Heart right ventricle (tissue), 16 donors: ENCODE measurements at regions of chr6 and their contacts with region 1.

Region 1: DNA sequence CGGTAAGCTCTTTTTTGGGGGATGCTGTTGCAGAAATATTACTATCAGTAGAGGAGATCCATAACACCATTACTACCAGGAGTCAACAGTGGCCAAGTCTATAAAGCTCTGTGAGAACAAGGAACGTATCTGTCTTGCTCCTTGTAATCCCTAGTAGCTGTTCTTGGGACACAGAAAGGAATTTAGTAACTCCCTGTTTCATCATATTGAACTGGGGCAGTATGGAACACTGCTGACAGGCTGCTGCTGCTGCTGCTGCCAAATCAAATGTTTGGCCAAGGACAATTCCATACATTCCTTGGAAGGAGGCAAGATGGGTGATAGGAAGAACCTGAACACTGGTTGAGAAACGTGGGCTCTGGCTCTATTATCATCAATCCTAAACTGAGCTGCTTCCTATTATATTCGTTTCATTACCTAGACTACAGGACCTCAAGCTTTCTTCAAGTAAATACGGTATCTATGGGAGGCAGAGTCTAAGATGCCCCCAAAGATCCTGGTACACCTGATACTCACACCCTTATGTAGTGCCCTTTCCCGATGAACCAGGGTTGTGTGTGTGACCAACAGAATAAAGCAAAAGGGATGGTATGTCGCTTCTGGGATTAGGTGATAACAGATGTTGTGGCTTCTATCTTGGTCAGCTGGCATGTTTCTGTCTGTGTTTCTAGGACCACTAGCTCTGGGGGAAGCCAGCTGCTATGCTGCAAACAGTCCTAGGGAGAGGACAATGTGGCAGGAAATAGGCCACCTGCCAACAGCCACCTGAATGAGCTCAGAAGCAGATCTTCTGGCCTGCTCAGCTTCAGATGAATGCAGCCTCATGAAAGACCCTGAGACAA is 39.5 kb downstream of the ELOVL5 start:
- DNase-seq: no peak
- ATAC-seq: peak in 5 of 8 donors; percentile 36 to 63 (median 48)
- H3K4me3 ChIP-seq: no peak overlapping the region
- H3K27ac ChIP-seq: peak overlapping the region in 2 of 10 donors; percentile 31 to 35
- H3K4me1 ChIP-seq: peaks cover 0 to 78% (median 46%) of the 10 kb centered on the region in 9 donors
- H3K27me3 ChIP-seq: no peaks in the 10 kb centered on the region
- CTCF ChIP-seq: no peak

Region 2: DNA sequence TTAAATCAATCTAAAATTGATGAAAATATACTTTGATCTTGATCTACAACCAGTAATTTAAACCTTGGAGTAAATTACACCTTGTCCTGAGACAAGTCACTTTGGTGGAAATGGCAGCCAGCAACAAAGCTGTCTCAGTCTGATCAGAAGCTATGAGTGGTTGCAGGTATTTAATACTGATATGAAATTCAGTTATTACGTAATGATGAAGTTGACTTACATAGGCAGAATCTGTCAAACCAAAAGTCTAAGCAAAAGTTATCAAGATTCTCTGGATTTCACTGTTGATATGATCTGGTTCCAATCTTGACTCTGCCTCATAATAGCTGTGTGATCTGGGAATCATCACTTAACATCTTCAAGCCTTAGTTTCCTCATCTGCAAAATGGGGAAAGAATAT is 441.0 kb before region 1 on chr6:
- intact Hi-C with region 1: no loop called
- DNase-seq: no peak
- ATAC-seq: no peak
- H3K4me3 ChIP-seq: no peak overlapping the region
- H3K27ac ChIP-seq: no peak overlapping the region
- H3K4me1 ChIP-seq: no peaks in the 10 kb centered on the region
- H3K27me3 ChIP-seq: no peaks in the 10 kb centered on the region
- CTCF ChIP-seq: no peak

Region 3: GRCh38 chr6:53239526-53239925 is 69.8 kb before region 1 on chr6:
- intact Hi-C with region 1: no loop called
- DNase-seq: no peak
- ATAC-seq: no peak
- H3K4me3 ChIP-seq: no peak overlapping the region
- H3K27ac ChIP-seq: no peak overlapping the region
- H3K4me1 ChIP-seq: peaks cover 0 to 28% (median 0%) of the 10 kb centered on the region in 9 donors
- H3K27me3 ChIP-seq: no peaks in the 10 kb centered on the region
- CTCF ChIP-seq: no peak

Region 4: GRCh38 chr6:53461041-53461656 is 151.9 kb after region 1 on chr6:
- intact Hi-C with region 1: loop called in 1 of 10 experiments (anchors 10 kb)
- DNase-seq: no peak
- ATAC-seq: no peak
- H3K4me3 ChIP-seq: no peak overlapping the region
- H3K27ac ChIP-seq: peak overlapping the region in 1 of 10 donors; percentile 54
- H3K4me1 ChIP-seq: peaks cover 0 to 44% (median 9%) of the 10 kb centered on the region in 9 donors
- H3K27me3 ChIP-seq: no peaks in the 10 kb centered on the region
- CTCF ChIP-seq: no peak